ENCODE measurements at regions of chr1 and their contacts with region 1.

Region 1: DNA sequence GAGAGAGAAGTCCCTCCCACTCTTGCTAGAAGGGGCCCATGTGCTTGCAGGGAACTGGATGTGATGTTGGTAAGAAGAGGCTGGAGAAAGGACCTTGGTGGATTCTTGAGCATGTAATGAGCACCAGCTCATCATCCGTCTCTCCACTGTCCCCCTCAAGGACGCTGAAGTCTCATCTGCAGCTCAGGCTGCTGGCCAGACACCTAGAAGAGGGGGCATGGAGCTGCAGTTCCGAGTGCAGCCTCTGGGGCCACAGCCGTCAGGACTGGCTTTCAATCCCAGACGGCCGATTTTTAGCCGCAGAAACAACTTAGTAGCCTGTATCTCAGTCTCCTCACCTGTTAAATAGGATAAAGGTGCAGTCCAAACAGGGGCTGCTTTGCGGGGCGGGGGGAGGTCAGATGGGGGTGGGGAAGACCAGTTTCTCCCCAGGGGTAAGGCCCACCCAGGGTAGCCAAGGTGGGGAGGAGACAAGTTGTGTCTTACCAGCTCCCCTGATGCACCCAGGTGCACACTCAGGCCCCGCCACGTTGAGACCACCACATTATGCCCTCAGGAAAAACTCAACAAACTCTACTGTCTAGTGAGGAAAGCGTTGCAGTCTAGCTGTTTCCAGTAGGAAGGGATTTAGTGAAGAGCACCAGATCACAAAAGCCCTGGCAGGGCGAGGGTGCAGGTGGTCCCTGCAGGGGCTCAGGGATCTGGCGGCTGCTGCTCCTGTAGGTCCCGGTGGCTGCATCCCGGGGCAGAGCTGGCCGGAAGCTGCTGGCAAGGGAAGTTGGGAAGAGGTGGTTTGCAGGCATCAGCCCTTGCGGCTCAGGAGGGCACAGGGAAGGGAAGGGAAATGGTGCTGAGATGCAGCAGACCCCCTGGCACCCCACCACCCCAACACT is 29.5 kb downstream of the LDLRAP1 start:
- DNase-seq: peak; percentile 39 to 86
- H3K4me3 ChIP-seq: no peak overlapping the region
- H3K27ac ChIP-seq: no peak overlapping the region
- H3K4me1 ChIP-seq: peaks cover 0 to 35% (median 21%) of the 10 kb centered on the region in 4 experiments; a peak in 6 of 7 replicates
- H3K27me3 ChIP-seq: no peaks in the 10 kb centered on the region
- CTCF ChIP-seq: peak in 2 of 3 experiments; percentile 62 to 82; a peak in 3 of 4 replicates
- EP300 ChIP-seq: no peak
- POLR2A ChIP-seq: no peak
- RAD21 ChIP-seq: peak; percentile 35 to 58; a peak in 3 of 4 replicates

Region 2: GRCh38 chr1:25520446-25521061 is 52.4 kb before region 1 on chr1:
- CTCF ChIA-PET with region 1: interaction called, 10 read pairs
- POLR2A ChIA-PET with region 1: no interaction called
- DNase-seq: peak in 1 of 2 experiments; percentile 77
- H3K4me3 ChIP-seq: no peak overlapping the region
- H3K27ac ChIP-seq: no peak overlapping the region
- H3K4me1 ChIP-seq: peaks cover 4 to 8% (median 4%) of the 10 kb centered on the region in 4 experiments; a peak in 6 of 7 replicates
- H3K27me3 ChIP-seq: no peaks in the 10 kb centered on the region; a peak in 1 of 7 replicates
- CTCF ChIP-seq: peak in 2 of 3 experiments; percentile 63 to 76; a peak in 3 of 4 replicates
- EP300 ChIP-seq: no peak
- POLR2A ChIP-seq: no peak
- RAD21 ChIP-seq: peak; percentile 51 to 64

Region 3: GRCh38 chr1:25543425-25544242 is 29.3 kb before region 1 on chr1 and contains the start of gene LDLRAP1:
- CTCF ChIA-PET with region 1: interaction called, 34 read pairs
- POLR2A ChIA-PET with region 1: interaction called, 4 read pairs
- DNase-seq: peak; percentile 21 to 87
- H3K4me3 ChIP-seq: peak within 1 kb of the TSS; percentile 63 to 79 (median 66)
- H3K27ac ChIP-seq: no peak within 1 kb of the TSS; the same call in 1 of the 2 replicates
- H3K4me1 ChIP-seq: peaks cover 0 to 9% (median 5%) of the 10 kb centered on the region in 4 experiments; a peak in 4 of 7 replicates
- H3K27me3 ChIP-seq: peaks cover 0 to 5% (median 3%) of the 10 kb centered on the region in 4 experiments; a peak in 5 of 7 replicates
- CTCF ChIP-seq: no peak
- EP300 ChIP-seq: no peak
- POLR2A ChIP-seq: peak in 1 of 2 experiments; percentile 47; a peak in 1 of 3 replicates
- RAD21 ChIP-seq: peak in 1 of 2 experiments; percentile 5; a peak in 1 of 4 replicates
- total RNA-seq, gene LDLRAP1: 12.8 and 14.0 TPM in 2 replicates

Region 4: DNA sequence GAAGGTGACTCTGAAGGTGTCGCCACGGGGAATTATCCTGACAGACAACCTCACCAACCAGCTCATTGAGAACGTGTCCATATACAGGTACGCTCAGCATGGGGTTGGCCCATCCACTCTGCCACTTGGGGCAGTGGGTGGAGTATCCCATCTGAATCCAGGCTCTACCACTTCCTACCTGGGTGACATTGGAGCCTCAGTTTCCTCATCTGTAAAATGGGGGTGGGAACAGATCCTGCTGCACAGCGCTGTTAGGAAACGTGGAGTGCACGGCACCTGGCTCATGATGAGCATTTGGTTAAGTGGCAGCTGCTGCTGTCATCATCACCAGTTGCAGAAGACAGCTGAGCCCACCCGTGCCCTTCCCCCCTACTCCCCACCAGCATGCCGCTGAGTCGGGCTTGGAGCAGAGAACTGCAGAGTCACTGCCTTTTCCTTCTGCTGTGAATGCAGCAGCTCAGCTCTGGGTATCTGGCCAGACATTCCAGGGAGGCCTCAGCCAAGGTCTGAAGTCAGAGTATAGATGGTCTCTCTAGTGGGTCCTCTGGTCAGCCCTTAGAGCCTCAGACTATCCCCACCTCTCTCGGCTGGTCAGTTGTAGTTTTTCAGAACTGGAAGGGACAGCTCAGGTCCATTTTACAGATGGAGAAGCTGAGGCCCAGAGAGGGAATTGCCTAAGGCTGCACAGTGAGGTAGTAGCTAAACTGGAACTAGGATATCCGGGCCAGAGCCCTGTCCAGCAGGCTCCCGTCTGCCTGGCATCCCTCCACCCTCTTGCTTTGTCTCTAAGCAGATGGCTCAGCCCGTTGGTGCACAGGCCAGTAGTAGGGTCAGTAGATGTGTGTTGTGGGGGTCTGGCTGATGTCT is 17.8 kb before region 1 on chr1:
- CTCF ChIA-PET with region 1: interaction called, 72 read pairs
- POLR2A ChIA-PET with region 1: interaction called, 4 read pairs
- DNase-seq: no peak
- H3K4me3 ChIP-seq: no peak overlapping the region
- H3K27ac ChIP-seq: no peak overlapping the region
- H3K4me1 ChIP-seq: no peaks in the 10 kb centered on the region
- H3K27me3 ChIP-seq: no peaks in the 10 kb centered on the region
- CTCF ChIP-seq: no peak
- EP300 ChIP-seq: no peak
- POLR2A ChIP-seq: no peak
- RAD21 ChIP-seq: no peak

Region 5: DNA sequence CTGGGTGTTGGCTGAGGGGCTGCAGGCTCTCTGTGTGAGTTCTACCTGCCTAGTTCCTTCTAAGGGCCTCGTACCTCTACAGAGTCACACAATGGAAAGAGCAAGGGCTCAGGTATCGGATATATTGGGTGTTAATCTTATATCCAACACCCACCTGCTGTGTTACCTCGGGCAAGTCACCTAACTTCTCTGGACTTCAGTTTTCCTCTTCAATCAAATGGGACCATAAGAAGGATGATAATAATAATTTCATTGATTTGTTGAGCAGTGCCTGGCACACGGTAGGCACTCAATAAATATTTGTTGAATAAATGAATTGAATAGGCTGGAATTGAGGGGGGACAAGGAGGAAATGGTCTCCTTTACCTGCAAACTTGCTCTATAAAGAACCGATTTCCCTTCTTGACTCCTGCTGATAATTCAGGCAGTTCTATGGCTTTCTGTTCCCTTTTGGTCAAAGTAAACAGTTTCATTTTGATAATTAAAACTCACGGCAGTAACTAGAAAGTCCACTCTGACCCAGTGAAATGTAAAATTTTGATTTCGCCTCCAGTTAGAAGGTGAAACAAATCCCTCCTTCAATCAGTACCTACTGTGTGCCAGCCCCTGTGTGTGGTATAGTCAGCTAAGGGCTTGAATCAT is 27.1 kb after region 1 on chr1:
- CTCF ChIA-PET with region 1: interaction called, 12 read pairs
- POLR2A ChIA-PET with region 1: no interaction called
- DNase-seq: no peak
- H3K4me3 ChIP-seq: no peak overlapping the region
- H3K27ac ChIP-seq: no peak overlapping the region
- H3K4me1 ChIP-seq: no peaks in the 10 kb centered on the region
- H3K27me3 ChIP-seq: no peaks in the 10 kb centered on the region
- CTCF ChIP-seq: no peak
- EP300 ChIP-seq: no peak
- POLR2A ChIP-seq: no peak
- RAD21 ChIP-seq: no peak

Region 6: GRCh38 chr1:25619101-25619890 is 46.3 kb after region 1 on chr1:
- CTCF ChIA-PET with region 1: interaction called, 17 read pairs
- POLR2A ChIA-PET with region 1: no interaction called
- DNase-seq: peak; percentile 41 to 87
- H3K4me3 ChIP-seq: no peak overlapping the region
- H3K27ac ChIP-seq: no peak overlapping the region
- H3K4me1 ChIP-seq: peaks cover 0 to 25% (median 6%) of the 10 kb centered on the region in 4 experiments; a peak in 6 of 7 replicates
- H3K27me3 ChIP-seq: peaks cover 9 to 29% (median 17%) of the 10 kb centered on the region in 4 experiments
- CTCF ChIP-seq: peak; percentile 94 to 99 (median 99)
- EP300 ChIP-seq: no peak
- POLR2A ChIP-seq: no peak
- RAD21 ChIP-seq: peak; percentile 83 to 87

Region 7: GRCh38 chr1:25796811-25797458 is 224.0 kb after region 1 on chr1:
- CTCF ChIA-PET with region 1: interaction called, 18 read pairs
- POLR2A ChIA-PET with region 1: interaction called, 6 read pairs
- DNase-seq: peak; percentile 65 to 98
- H3K4me3 ChIP-seq: no peak overlapping the region
- H3K27ac ChIP-seq: no peak overlapping the region
- H3K4me1 ChIP-seq: peaks cover 4 to 14% (median 11%) of the 10 kb centered on the region in 4 experiments; a peak in 6 of 7 replicates
- H3K27me3 ChIP-seq: peaks cover 0 to 2% (median under 1%) of the 10 kb centered on the region in 4 experiments; a peak in 3 of 7 replicates
- CTCF ChIP-seq: peak; percentile 86 to 89 (median 87)
- EP300 ChIP-seq: no peak
- POLR2A ChIP-seq: no peak
- RAD21 ChIP-seq: peak; percentile 87 to 92

Measured in H1 (cell line).